ENCODE measurements at regions of chr2 and their contacts with region 1.

Region 1: GRCh38 chr2:68362069-68362468 is 3.0 kb upstream of the PLEK start:
- DNase-seq: peak; percentile 38 to 76
- H3K4me3 ChIP-seq: no peak overlapping the region
- H3K27ac ChIP-seq: no peak overlapping the region
- H3K4me1 ChIP-seq: no peaks in the 10 kb centered on the region; a peak in 1 of 7 replicates
- H3K27me3 ChIP-seq: peaks cover 0 to 7% (median 3%) of the 10 kb centered on the region in 4 experiments; a peak in 3 of 7 replicates
- CTCF ChIP-seq: peak; percentile 77 to 92 (median 88)
- EP300 ChIP-seq: peak in 1 of 2 experiments; percentile 52; a peak in 1 of 3 replicates
- POLR2A ChIP-seq: no peak
- RAD21 ChIP-seq: peak; percentile 76 to 82

Region 2: GRCh38 chr2:68328901-68329300 is 33.2 kb before region 1 on chr2:
- CTCF ChIA-PET with region 1: interaction called, 13 read pairs
- POLR2A ChIA-PET with region 1: no interaction called
- DNase-seq: no peak
- H3K4me3 ChIP-seq: no peak overlapping the region
- H3K27ac ChIP-seq: no peak overlapping the region
- H3K4me1 ChIP-seq: no peaks in the 10 kb centered on the region
- H3K27me3 ChIP-seq: no peaks in the 10 kb centered on the region
- CTCF ChIP-seq: no peak
- EP300 ChIP-seq: no peak
- POLR2A ChIP-seq: no peak
- RAD21 ChIP-seq: no peak

Region 3: DNA sequence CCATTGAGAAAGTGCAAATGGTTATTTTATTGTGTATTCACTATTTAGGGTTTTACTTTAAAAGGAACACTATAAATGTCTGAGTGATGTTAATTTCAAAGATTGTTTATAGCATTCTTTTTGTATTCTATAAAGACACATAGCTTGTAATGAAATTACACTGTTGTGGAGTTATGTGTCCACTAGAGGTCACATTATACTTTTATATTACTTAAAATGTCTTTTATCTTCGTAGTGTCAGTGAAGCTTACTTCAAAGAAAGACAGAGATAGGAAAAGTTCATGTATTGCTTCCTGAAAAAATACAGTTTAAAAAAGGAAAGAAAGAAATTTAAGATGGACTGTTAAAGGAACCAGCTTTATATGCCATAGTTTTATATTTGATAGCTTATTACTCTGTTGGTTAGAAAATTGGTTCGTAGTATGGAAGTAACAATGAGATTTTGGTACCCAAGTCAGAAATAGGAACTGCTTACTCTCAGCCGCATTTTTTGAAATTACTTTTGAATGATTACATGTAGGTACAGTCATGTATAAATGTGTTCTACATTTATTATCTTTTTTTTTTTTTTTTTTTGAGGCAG is 125.8 kb after region 1 on chr2:
- CTCF ChIA-PET with region 1: no interaction called
- POLR2A ChIA-PET with region 1: no interaction called
- DNase-seq: no peak
- H3K4me3 ChIP-seq: no peak overlapping the region
- H3K27ac ChIP-seq: no peak overlapping the region
- H3K4me1 ChIP-seq: 0 out of 7 replicates have a peak, but pooled peaks cover 0 to 3% (median 0%) of the 10 kb centered on the region in 4 experiments
- H3K27me3 ChIP-seq: no peaks in the 10 kb centered on the region
- CTCF ChIP-seq: peak in 1 of 3 experiments; percentile 17; a peak in 2 of 4 replicates
- EP300 ChIP-seq: no peak
- POLR2A ChIP-seq: no peak
- RAD21 ChIP-seq: peak in 1 of 2 experiments; percentile 44; a peak in 3 of 4 replicates

Region 4: DNA sequence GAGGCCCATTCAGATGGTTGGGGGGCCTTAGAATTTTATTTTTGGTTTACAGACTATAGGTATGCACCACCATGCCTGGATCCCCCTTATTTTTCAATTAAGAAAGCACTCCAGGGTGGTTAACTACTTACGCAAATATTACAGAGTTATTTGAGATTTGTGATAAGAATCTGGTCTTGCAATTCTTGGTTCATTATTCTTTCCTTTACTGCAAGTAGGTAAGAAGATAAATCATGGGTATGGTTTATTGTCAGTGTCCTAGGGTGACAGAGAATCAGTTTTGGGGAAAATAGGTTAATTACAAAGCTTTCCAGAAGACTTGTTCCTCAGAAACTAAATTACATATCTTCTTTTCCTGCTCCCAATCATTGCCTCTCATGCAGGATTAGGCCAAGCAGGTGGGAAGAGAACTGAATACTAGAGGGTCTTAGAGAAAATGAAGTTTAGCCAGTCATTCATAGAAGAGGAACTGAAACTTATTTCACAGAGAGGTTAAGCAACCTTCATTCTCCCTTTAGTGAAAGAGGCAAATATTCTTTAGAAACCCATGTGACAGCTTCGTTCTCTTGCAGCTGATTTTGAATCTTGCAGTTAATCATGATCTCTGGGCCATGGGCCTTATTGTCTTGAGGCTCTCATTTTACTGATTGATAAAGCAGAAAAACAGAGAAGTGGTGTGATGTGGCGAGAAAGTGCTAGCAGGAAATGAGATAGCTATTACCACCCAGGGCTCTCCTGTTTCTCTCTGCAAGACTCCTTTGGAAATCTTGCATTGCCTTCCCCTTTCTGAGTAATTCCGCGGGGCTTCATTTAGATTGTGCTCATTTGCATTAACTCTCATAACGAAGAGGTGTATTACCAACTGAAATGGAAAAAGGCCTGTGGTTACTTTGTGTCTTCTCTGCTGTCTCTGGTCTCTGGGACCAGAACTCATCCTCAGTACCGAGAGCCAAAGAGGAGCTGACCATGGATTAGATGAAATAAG is 327.8 kb after region 1 on chr2:
- CTCF ChIA-PET with region 1: no interaction called
- POLR2A ChIA-PET with region 1: no interaction called
- DNase-seq: no peak
- H3K4me3 ChIP-seq: no peak overlapping the region
- H3K27ac ChIP-seq: no peak overlapping the region
- H3K4me1 ChIP-seq: peaks cover 0 to 15% (median 6%) of the 10 kb centered on the region in 4 experiments; a peak in 4 of 7 replicates
- H3K27me3 ChIP-seq: no peaks in the 10 kb centered on the region
- CTCF ChIP-seq: no peak
- EP300 ChIP-seq: no peak
- POLR2A ChIP-seq: no peak
- RAD21 ChIP-seq: no peak

Region 5: GRCh38 chr2:68734688-68735525 is 372.8 kb after region 1 on chr2 and contains the start of gene ARHGAP25:
- CTCF ChIA-PET with region 1: no interaction called
- POLR2A ChIA-PET with region 1: no interaction called
- DNase-seq: no peak
- H3K4me3 ChIP-seq: no peak within 1 kb of the TSS
- H3K27ac ChIP-seq: no peak within 1 kb of the TSS
- H3K4me1 ChIP-seq: no peaks in the 10 kb centered on the region
- H3K27me3 ChIP-seq: no peaks in the 10 kb centered on the region; a peak in 1 of 7 replicates
- CTCF ChIP-seq: no peak
- EP300 ChIP-seq: no peak
- POLR2A ChIP-seq: no peak
- RAD21 ChIP-seq: no peak
- total RNA-seq, gene ARHGAP25: 0.42 and 1.2 TPM in 2 replicates